Activated T-helper 1 cell treated with anti-CD3 and anti-CD28 coated beads, Interleukin-12 subunit alpha, Interleukin-12 subunit beta, Interleukin-2, Interleukin-4 antibody, amounts not matched to agents 30 ng/mL and 10 ng/mL and 1 ng/mL, durations not matched to agents 14 hours and 24 hours and 36 hours (primary cell): ENCODE measurements at regions of chr18 and their contacts with region 1.

Region 1: DNA sequence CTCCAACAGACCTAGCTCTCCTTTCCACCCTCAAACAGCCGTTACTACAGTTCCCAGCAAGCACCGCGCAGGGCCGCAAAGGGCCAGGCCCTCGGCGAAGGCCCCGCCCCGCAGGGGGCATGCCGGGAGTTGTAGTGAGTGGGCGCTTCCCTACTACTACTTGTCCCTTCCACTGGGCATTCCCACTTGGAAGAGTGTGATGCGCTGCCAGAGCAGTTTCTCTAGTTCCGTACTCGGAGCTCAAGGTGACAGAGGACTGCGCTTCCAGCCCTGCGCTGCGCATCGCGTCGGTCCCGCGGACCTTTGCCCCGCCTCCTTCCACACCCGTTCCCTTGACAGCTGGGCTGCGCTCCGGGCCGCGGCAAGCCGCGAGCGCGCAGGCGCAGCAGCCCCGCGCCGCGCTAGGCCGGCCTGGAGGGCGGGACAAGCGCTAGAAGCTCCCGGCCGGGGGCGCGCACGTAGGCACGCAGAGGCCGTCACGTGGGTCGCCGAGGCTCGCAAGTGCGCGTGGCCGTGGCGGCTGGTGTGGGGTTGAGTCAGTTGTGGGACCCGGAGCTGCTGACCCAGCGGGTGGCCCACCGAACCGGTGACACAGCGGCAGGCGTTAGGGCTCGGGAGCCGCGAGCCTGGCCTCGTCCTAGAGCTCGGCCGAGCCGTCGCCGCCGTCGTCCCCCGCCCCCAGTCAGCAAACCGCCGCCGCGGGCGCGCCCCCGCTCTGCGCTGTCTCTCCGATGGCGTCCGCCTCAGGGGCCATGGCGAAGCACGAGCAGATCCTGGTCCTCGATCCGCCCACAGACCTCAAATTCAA is at the start of gene VAPA:
- DNase-seq: peak; percentile 92
- H3K4me3 Mint-ChIP-seq: peak within 1 kb of the TSS; percentile 91
- H3K27ac Mint-ChIP-seq: peak within 1 kb of the TSS; percentile 94
- H3K4me1 Mint-ChIP-seq: peaks cover 27% of the 10 kb centered on the region
- H3K27me3 Mint-ChIP-seq: peaks cover 9% of the 10 kb centered on the region
- total RNA-seq, gene VAPA: 187 and 201 TPM in 2 replicates

Region 2: DNA sequence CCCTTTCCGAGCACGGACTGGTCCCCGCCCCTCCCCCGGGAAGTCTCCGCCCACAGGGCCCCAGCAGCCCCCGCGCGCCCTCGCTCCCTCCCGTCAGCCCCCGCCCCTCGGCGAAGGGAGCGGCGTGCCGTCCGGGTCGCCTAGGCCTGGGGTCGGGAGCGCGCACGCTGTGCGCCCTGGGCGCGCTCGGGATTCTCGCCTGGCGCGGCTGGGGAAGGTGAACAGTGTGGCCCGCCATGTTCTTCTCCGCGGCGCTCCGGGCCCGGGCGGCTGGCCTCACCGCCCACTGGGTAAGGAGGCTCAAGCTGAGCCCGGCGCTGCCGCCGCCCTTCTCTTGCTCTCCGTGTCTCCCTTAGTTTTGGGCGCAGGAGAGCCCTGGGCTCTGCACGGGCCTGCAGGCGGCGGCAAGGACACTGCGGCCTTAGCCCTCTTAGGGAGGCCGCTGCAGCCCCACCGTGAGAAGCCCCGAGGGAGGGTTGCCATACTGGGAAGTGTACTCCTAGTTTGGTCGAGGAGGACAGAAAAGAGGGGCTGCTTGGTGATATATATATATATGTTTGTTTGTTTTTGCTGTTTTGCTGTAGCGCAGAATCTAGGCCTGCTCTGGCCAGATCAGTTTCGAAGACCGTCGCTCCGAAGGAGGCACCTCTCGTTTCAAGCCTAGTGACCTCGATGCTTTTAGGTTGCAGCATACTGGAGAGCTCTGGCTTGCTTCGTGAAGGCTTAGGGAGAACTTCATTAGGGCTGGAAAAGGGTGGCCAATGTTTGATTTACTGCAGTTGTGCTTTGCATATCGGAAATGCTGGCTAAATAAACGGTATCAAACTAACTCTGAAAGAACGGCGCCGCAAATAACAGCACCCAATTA is 811.0 kb before region 1 on chr18 and contains the start of gene NDUFV2:
- intact Hi-C with region 1: loop called (anchors 5 kb)
- DNase-seq: peak; percentile 98
- H3K4me3 Mint-ChIP-seq: peak within 1 kb of the TSS; percentile 95
- H3K27ac Mint-ChIP-seq: peak within 1 kb of the TSS; percentile 98
- H3K4me1 Mint-ChIP-seq: peaks cover 63% of the 10 kb centered on the region
- H3K27me3 Mint-ChIP-seq: no peaks in the 10 kb centered on the region
- total RNA-seq, gene NDUFV2: 381 and 391 TPM in 2 replicates

Region 3: GRCh38 chr18:9474983-9475642 is 438.6 kb before region 1 on chr18 and contains the start of gene RALBP1:
- intact Hi-C with region 1: loop called (anchors 1 kb)
- DNase-seq: peak; percentile 98
- H3K4me3 Mint-ChIP-seq: peak within 1 kb of the TSS; percentile 89
- H3K27ac Mint-ChIP-seq: peak within 1 kb of the TSS; percentile 95
- H3K4me1 Mint-ChIP-seq: peaks cover 30% of the 10 kb centered on the region
- H3K27me3 Mint-ChIP-seq: peaks cover 4% of the 10 kb centered on the region
- total RNA-seq, gene RALBP1: 40.9 and 42.4 TPM in 2 replicates

Region 4: GRCh38 chr18:9861157-9861556 is 52.6 kb before region 1 on chr18:
- intact Hi-C with region 1: loop called (anchors 5 kb)
- DNase-seq: no peak
- H3K4me3 Mint-ChIP-seq: no peak overlapping the region
- H3K27ac Mint-ChIP-seq: no peak overlapping the region
- H3K4me1 Mint-ChIP-seq: peaks cover 7% of the 10 kb centered on the region
- H3K27me3 Mint-ChIP-seq: peaks cover 2% of the 10 kb centered on the region

Region 5: DNA sequence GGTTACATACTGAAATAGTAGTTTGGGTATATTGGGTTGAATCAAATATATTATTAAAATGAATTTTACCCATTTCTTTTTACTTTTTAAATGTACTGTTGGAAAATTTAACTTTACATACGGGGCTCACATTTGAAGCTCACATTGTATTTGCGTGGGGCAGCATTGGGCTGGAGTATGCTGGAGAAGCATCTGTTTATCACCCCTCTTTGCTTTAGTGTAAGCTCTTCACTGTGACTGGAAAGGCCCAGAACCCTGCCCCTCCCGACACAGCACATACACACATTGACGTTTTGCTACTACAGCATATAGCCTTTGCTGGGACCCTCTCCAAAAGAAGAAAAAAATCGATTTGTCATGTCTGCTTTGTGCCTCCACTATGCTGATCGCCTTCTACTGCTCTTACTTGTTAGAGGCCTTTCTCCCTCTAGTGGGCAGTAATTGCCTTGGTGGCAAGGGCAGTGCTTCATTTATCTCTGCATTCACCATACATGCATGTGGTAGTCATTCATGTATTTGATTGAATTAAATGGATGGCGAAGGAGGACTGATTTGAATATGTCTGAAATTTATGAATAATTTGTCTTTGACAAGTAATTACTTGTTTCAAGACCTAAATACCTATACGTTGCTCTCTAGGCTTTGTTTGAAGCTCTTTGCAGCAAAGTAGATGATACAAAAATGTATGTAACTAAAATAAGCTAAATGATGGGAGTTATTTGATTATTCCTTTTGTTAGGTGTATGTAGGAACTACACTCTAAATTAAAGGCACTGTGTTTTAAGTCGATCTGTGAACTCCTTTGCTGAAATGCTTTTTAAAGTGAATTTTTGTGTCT is 37.5 kb after region 1 on chr18:
- intact Hi-C with region 1: loop called (anchors 5 kb)
- DNase-seq: no peak
- H3K4me3 Mint-ChIP-seq: no peak overlapping the region
- H3K27ac Mint-ChIP-seq: no peak overlapping the region
- H3K4me1 Mint-ChIP-seq: peaks cover 9% of the 10 kb centered on the region
- H3K27me3 Mint-ChIP-seq: no peaks in the 10 kb centered on the region

Region 6: DNA sequence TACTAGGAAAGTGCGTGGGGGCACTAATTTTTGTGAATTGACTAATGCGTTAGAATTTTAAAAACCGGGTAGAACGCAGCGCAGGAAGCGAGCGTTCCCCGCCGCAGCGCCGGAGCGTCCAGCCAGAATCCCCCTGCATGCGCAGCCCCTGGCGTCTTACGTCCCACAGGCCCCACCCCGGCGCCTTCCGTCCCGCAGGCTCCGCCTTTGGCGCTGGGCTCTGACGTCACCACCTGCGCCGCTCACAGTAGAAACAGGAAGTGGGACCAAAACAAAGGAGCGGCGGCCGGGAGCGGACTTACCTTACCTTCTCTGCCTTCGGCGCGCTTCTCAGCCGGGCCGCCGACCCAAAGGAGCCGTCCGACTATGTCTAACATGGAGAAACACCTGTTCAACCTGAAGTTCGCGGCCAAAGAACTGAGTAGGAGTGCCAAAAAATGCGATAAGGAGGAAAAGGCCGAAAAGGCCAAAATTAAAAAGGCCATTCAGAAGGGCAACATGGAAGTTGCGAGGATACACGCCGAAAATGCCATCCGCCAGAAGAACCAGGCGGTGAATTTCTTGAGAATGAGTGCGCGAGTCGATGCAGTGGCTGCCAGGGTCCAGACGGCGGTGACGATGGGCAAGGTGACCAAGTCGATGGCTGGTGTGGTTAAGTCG is 1937.5 kb after region 1 on chr18 and contains the start of gene CHMP1B:
- intact Hi-C with region 1: loop called (anchors 5 kb)
- DNase-seq: peak; percentile 95
- H3K4me3 Mint-ChIP-seq: peak within 1 kb of the TSS; percentile 99
- H3K27ac Mint-ChIP-seq: peak within 1 kb of the TSS; percentile 100
- H3K4me1 Mint-ChIP-seq: peaks cover 38% of the 10 kb centered on the region
- H3K27me3 Mint-ChIP-seq: peaks cover 6% of the 10 kb centered on the region
- total RNA-seq, gene CHMP1B: 24.8 and 26.8 TPM in 2 replicates